ENCODE measurements at regions of chrX and their contacts with region 1.

Region 1: GRCh38 chrX:107861056-107861455 is 35.4 kb downstream of the MID2 start:
- DNase-seq: no peak
- H3K4me3 ChIP-seq: no peak overlapping the region
- H3K27ac ChIP-seq: no peak overlapping the region
- H3K4me1 ChIP-seq: no peaks in the 10 kb centered on the region
- H3K27me3 ChIP-seq: no peaks in the 10 kb centered on the region
- CTCF ChIP-seq: no peak

Region 2: DNA sequence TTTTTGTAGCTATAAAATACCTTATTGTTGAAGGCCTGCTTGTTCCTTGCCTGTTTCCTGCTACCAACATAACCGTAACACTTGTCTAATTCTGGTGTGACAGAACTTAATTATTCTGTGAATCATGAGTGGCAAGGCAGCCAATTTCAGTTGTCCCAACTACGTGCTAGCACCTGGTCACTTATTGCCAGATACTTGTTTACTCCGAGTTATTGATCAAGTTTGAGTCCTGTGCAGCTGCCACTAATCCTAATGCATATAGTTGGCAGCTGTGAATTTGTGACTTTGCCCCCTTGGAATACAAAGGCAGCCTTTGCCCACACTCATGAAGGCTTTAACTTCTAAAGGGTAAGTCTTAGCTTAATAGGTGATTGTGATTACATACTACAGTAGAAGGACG is 1142.3 kb before region 1 on chrX:
- CTCF ChIA-PET with region 1: no interaction called
- dilution Hi-C with region 1: no loop called
- in situ Hi-C with region 1: no loop called
- intact Hi-C with region 1: loop called (anchors 5 kb)
- DNase-seq: no peak
- H3K4me3 ChIP-seq: no peak overlapping the region
- H3K27ac ChIP-seq: no peak overlapping the region
- H3K4me1 ChIP-seq: no peaks in the 10 kb centered on the region
- H3K27me3 ChIP-seq: peaks cover 3% of the 10 kb centered on the region
- CTCF ChIP-seq: no peak

Region 3: GRCh38 chrX:107787827-107788226 is 73.2 kb before region 1 on chrX:
- CTCF ChIA-PET with region 1: no interaction called
- dilution Hi-C with region 1: loop called (anchors 5 kb)
- in situ Hi-C with region 1: no loop called
- intact Hi-C with region 1: no loop called
- DNase-seq: no peak
- H3K4me3 ChIP-seq: no peak overlapping the region
- H3K27ac ChIP-seq: no peak overlapping the region
- H3K4me1 ChIP-seq: no peaks in the 10 kb centered on the region
- H3K27me3 ChIP-seq: peaks cover 3% of the 10 kb centered on the region
- CTCF ChIP-seq: no peak

Region 4: GRCh38 chrX:107818900-107819521 is 42.0 kb before region 1 on chrX:
- CTCF ChIA-PET with region 1: no interaction called
- dilution Hi-C with region 1: loop called (anchors 5 kb)
- in situ Hi-C with region 1: no loop called
- intact Hi-C with region 1: no loop called
- DNase-seq: no peak
- H3K4me3 ChIP-seq: no peak overlapping the region
- H3K27ac ChIP-seq: no peak overlapping the region
- H3K4me1 ChIP-seq: no peaks in the 10 kb centered on the region
- H3K27me3 ChIP-seq: peaks cover 2% of the 10 kb centered on the region
- CTCF ChIP-seq: no peak

Region 5: DNA sequence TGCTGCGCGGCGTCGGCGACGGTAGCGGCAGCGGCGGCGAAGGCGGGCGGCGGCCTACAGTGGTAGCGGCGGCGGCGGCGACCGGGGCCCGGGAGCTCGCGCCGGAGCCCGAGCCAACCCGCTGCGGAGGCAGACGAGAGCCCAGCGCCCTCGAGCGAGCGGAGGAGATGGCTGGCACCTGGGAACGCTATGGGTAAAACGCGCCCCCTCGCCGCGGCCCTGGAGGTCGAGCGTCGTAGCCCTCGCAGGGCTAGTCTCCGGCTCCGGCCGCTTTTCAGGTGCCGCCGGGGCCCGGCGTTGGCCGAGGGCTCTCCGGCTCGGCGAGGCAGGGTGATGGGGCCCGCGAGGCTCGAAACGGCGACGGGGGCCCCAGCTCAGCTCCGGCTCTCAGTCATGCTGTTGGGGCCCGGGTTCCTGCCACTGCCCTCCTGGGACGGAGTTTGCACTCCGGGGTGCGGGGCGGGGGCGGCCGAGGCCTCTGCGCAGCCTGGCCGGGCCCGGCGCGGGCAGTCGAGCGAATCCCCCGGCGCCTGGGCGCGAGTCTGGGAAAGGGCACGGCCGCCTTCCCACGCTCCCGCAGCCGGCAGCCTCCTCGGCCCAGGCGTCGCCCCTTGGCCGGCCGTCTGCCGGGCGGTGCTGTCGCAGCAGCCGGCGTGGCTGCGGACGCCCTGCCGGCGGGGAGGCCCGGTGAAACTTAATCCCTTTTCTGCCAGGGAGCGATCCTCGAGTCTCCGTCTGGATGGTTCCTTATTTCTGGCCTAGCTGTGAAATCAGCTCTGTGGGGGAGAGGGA is 34.6 kb before region 1 on chrX:
- CTCF ChIA-PET with region 1: no interaction called
- dilution Hi-C with region 1: no loop called
- in situ Hi-C with region 1: no loop called
- intact Hi-C with region 1: loop called (anchors 5 kb)
- DNase-seq: peak; percentile 41
- H3K4me3 ChIP-seq: peak overlapping the region; percentile 45 to 60 (median 58)
- H3K27ac ChIP-seq: peak overlapping the region; percentile 41
- H3K4me1 ChIP-seq: no peaks in the 10 kb centered on the region
- H3K27me3 ChIP-seq: peaks cover under 1% of the 10 kb centered on the region
- CTCF ChIP-seq: no peak